Prostate gland (tissue), 2 donors: ENCODE measurements at regions of chr12 and their contacts with region 1.

Region 1: DNA sequence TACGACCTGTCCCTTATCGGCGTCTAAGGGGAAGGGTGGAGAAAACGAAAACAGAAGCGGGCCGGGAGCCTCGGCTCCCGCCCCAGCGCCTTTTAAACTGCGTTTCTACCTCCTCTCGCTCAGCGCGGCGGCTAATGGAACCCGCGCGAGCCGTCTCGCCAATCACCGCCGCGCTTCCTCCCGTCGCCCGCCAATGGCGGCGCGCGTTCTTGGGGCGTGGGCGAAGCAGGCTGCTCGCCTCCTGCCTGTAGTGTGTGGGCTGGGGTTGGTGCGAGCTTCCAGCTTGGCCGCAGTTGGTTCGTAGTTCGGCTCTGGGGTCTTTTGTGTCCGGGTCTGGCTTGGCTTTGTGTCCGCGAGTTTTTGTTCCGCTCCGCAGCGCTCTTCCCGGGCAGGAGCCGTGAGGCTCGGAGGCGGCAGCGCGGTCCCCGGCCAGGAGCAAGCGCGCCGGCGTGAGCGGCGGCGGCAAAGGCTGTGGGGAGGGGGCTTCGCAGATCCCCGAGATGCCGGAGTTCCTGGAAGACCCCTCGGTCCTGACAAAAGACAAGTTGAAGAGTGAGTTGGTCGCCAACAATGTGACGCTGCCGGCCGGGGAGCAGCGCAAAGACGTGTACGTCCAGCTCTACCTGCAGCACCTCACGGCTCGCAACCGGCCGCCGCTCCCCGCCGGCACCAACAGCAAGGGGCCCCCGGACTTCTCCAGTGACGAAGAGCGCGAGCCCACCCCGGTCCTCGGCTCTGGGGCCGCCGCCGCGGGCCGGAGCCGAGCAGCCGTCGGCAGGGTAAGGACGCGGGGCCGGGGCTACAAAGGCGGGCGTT is at the start of gene TMPO:
- DNase-seq: peak; percentile 88
- H3K4me3 ChIP-seq: peak within 1 kb of the TSS; percentile 94 to 97
- H3K27ac ChIP-seq: peak within 1 kb of the TSS; percentile 96 to 98
- H3K4me1 ChIP-seq: no peaks in the 10 kb centered on the region
- H3K27me3 ChIP-seq: no peaks in the 10 kb centered on the region
- CTCF ChIP-seq: peak in 3 of 4 experiments; percentile 21 to 30 (median 22)
- POLR2A ChIP-seq: peak; percentile 91
- total RNA-seq, gene TMPO: 47.7 to 79.6 TPM

Region 2: DNA sequence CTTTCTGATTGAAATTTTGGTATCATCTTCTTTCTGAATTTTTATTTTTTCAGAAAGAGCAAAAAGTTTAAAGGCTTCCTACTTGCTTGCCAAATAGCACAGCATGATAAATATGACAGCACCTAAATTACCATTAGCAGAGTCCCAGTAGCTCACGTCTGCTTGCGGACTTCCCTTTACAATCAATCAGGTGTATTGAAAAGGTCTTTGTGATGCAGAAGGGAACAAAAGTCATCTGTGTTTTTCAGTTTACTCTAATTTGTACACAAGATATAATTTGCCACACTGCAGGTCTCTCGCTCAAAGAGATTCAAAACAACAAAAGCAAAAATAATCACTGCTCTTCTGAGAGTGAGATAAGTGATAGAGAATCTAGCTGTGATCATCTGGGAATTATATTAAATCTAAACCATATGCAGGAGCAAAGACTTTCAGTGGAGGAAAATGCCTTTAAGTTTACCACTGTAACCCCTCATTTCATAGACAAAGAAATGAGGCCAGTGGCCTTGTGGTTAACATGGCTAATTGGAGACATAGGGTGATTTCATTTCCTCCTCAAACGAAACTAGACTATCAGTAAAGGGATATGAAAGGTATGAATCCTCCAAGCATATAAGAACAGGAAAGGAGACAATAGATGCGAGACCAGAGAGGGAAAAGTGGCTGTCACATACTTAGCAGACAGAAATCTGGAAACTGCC is 241.0 kb before region 1 on chr12:
- intact Hi-C with region 1: no loop called
- DNase-seq: no peak
- H3K4me3 ChIP-seq: no peak overlapping the region
- H3K27ac ChIP-seq: no peak overlapping the region
- H3K4me1 ChIP-seq: no peaks in the 10 kb centered on the region
- H3K27me3 ChIP-seq: no peaks in the 10 kb centered on the region
- CTCF ChIP-seq: no peak
- POLR2A ChIP-seq: no peak

Region 3: GRCh38 chr12:98317939-98318899 is 197.4 kb before region 1 on chr12:
- intact Hi-C with region 1: no loop called
- DNase-seq: no peak
- H3K4me3 ChIP-seq: no peak overlapping the region
- H3K27ac ChIP-seq: no peak overlapping the region
- H3K4me1 ChIP-seq: no peaks in the 10 kb centered on the region
- H3K27me3 ChIP-seq: no peaks in the 10 kb centered on the region
- CTCF ChIP-seq: no peak
- POLR2A ChIP-seq: no peak

Region 4: GRCh38 chr12:98424726-98425401 is 90.7 kb before region 1 on chr12:
- intact Hi-C with region 1: loop called (anchors 2 kb)
- DNase-seq: peak; percentile 50
- H3K4me3 ChIP-seq: no peak overlapping the region
- H3K27ac ChIP-seq: no peak overlapping the region
- H3K4me1 ChIP-seq: no peaks in the 10 kb centered on the region
- H3K27me3 ChIP-seq: no peaks in the 10 kb centered on the region
- CTCF ChIP-seq: peak; percentile 15 to 69 (median 56)
- POLR2A ChIP-seq: no peak

Region 5: GRCh38 chr12:98490501-98491453 is 24.8 kb before region 1 on chr12:
- intact Hi-C with region 1: loop called (anchors 2 kb)
- DNase-seq: peak; percentile 75
- H3K4me3 ChIP-seq: no peak overlapping the region
- H3K27ac ChIP-seq: no peak overlapping the region
- H3K4me1 ChIP-seq: no peaks in the 10 kb centered on the region
- H3K27me3 ChIP-seq: no peaks in the 10 kb centered on the region
- CTCF ChIP-seq: peak; percentile 67 to 90 (median 81)
- POLR2A ChIP-seq: no peak

Region 6: DNA sequence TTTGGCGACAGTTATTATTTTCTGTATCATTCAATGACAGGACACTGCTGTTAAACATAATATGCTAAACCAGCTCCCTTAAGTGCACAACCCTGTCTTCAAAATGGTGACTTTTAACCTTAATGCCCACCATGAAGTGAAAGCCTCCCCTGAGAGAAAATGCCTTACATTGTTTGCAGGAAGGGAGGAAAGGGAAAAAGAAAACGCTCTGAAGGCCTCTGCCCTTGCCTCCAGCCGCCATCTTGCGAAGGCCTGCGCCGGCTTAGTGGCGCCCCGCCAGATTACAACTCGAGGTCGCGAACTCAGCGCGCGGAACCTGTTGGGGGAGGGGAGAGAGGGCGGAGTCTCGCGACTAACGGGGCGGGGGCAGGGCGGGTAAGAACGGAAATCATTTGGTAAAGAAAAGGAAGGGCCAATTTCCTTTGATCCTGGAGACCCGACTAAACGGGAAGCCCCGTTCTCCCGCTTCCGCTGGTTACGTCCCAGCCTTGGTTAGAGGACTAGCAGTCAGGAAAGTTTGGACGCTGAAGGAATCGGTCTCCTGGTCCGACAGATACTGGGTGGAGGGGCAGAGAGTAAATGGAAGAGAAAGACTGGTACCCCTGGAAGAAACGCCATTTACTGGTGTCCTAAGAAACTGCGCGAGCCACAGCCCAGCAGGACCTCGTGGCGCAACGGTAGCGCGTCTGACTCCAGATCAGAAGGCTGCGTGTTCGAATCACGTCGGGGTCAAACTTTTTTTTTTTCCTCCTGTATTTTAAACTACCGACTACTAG is 11.8 kb before region 1 on chr12:
- intact Hi-C with region 1: loop called (anchors 1 kb)
- DNase-seq: peak; percentile 88
- H3K4me3 ChIP-seq: peak overlapping the region; percentile 52 to 59
- H3K27ac ChIP-seq: peak overlapping the region; percentile 94 to 96
- H3K4me1 ChIP-seq: no peaks in the 10 kb centered on the region
- H3K27me3 ChIP-seq: no peaks in the 10 kb centered on the region
- CTCF ChIP-seq: no peak
- POLR2A ChIP-seq: no peak